Calu3 (cell line): ENCODE measurements at regions of chr5 and their contacts with region 1.

Region 1: GRCh38 chr5:145981589-145982491 is 45.5 kb downstream of the SH3RF2 start:
- DNase-seq: peak; percentile 68
- H3K4me3 Mint-ChIP-seq: peak overlapping the region; percentile 9
- H3K27ac Mint-ChIP-seq: peak overlapping the region; percentile 50
- H3K4me1 Mint-ChIP-seq: peaks cover 73% of the 10 kb centered on the region
- H3K27me3 Mint-ChIP-seq: no peaks in the 10 kb centered on the region
- CTCF ChIP-seq: no peak

Region 2: DNA sequence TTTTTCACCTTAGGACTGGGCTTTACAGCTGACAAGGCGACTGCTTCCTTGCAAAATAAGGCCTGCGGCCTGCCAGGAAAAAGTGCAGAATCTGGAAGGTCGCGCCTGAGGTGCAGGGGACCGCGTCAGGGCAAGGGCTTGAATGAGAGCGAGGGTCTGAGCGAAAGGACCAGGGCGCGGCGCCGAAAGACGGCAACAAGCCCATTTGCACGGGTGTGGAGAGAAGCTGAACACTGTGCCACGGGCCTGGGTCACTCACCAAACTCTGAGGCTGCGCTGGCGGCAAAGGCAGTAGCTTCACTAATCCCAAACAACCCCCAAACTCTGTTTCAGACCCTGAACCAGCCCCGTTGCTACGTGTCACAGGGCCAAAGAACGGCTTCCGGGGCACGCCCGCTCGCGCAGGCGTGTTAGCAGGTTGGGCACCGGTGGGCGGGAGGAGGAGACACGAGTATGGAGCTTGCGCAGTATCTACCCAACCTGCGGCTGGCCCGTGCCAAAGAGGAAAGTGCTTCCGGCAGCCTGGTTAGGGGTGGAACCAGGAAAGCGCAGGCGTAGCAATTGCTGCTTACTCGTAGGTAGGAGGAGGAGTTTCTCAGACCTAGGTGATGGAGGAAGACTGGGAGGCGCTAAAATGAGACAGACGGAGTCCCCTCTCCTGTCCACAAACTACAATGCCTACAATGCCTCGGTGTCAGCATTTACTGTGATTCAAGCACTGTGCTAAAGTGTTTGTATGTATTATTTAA is 1811.4 kb before region 1 on chr5 and contains the starts of genes KCTD16 and YIPF5:
- CTCF ChIA-PET with region 1: no interaction called
- intact Hi-C with region 1: loop called (anchors 1 kb)
- DNase-seq: peak; percentile 97
- H3K4me3 Mint-ChIP-seq: peak within 1 kb of the TSS; percentile 87
- H3K27ac Mint-ChIP-seq: peak within 1 kb of the TSS; percentile 85
- H3K4me1 Mint-ChIP-seq: peaks cover 20% of the 10 kb centered on the region
- H3K27me3 Mint-ChIP-seq: no peaks in the 10 kb centered on the region
- CTCF ChIP-seq: no peak
- total RNA-seq, gene KCTD16: 0.14 TPM in 1 of 2 replicates, not detected in the other
- total RNA-seq, gene YIPF5: 66.6 and 66.9 TPM in 2 replicates

Region 3: GRCh38 chr5:145856285-145856818 is 125.5 kb before region 1 on chr5:
- CTCF ChIA-PET with region 1: no interaction called
- intact Hi-C with region 1: loop called (anchors 5 kb)
- DNase-seq: peak; percentile 54
- H3K4me3 Mint-ChIP-seq: peak overlapping the region; percentile 58
- H3K27ac Mint-ChIP-seq: peak overlapping the region; percentile 85
- H3K4me1 Mint-ChIP-seq: peaks cover 40% of the 10 kb centered on the region
- H3K27me3 Mint-ChIP-seq: no peaks in the 10 kb centered on the region
- CTCF ChIP-seq: no peak

Region 4: GRCh38 chr5:145936401-145937131 is 45.3 kb before region 1 on chr5 and contains the start of gene SH3RF2:
- CTCF ChIA-PET with region 1: interaction called, 5 read pairs
- intact Hi-C with region 1: loop called (anchors 2 kb)
- DNase-seq: peak; percentile 76
- H3K4me3 Mint-ChIP-seq: peak within 1 kb of the TSS; percentile 76
- H3K27ac Mint-ChIP-seq: peak within 1 kb of the TSS; percentile 73
- H3K4me1 Mint-ChIP-seq: peaks cover 73% of the 10 kb centered on the region
- H3K27me3 Mint-ChIP-seq: no peaks in the 10 kb centered on the region
- CTCF ChIP-seq: no peak
- total RNA-seq, gene SH3RF2: 21.9 and 25.1 TPM in 2 replicates

Region 5: GRCh38 chr5:146188358-146188757 is 206.5 kb after region 1 on chr5:
- CTCF ChIA-PET with region 1: no interaction called
- intact Hi-C with region 1: loop called (anchors 2 kb)
- DNase-seq: no peak
- H3K4me3 Mint-ChIP-seq: no peak overlapping the region
- H3K27ac Mint-ChIP-seq: no peak overlapping the region
- H3K4me1 Mint-ChIP-seq: peaks cover 24% of the 10 kb centered on the region
- H3K27me3 Mint-ChIP-seq: peaks cover 7% of the 10 kb centered on the region
- CTCF ChIP-seq: no peak